ENCODE measurements at regions of chr5 and their contacts with region 1.

Region 1: DNA sequence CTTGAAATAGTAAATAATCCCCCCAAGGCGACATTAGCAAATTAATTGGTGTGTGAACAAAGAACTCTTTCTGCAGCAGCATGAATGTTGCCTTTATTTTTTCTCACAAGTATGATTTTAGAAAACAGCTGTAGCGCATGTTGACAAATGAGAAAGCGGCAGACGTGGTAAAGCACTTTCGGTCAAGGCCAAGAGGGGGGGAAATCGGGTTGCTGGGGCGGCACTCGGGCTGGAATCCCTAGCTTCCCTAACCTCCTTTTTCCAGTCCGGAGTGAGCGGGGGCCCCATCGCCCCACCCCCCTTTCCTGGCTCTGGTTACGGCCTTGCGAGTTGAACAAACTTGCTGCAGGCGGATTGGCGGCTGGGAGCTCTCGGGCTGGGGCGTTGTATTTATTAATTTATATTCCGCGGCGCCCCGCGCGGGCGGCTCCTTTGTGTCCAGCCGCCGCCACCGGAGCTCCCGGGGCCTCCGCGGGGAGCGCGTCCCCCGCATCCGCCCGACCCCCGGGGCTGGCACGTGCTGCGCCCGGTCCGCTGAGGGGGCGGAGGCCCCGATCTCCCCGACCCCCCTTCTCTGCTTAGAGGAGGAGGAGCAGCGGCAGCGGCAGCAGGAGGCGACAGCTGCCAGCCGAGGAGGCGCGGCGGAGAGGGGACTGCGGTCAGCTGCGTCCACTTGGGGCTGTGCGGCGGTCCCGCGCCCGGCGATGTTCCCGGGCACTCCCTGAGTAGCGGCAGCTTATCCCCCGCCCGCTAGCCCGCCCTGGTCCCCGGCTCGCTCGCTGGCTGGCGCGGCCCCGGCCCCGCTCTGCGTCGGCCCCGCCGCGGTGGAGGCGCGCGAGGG is at the start of gene RHOBTB3:
- DNase-seq: peak; percentile 52
- ATAC-seq: peak; percentile 73
- H3K4me3 Mint-ChIP-seq: peak within 1 kb of the TSS; percentile 87
- H3K27ac Mint-ChIP-seq: peak within 1 kb of the TSS; percentile 61
- H3K4me1 Mint-ChIP-seq: peaks cover 34% of the 10 kb centered on the region
- H3K27me3 Mint-ChIP-seq: peaks cover 18% of the 10 kb centered on the region
- CTCF ChIP-seq: no peak
- total RNA-seq, gene RHOBTB3: 3.3 and 5.0 TPM in 2 replicates

Region 2: DNA sequence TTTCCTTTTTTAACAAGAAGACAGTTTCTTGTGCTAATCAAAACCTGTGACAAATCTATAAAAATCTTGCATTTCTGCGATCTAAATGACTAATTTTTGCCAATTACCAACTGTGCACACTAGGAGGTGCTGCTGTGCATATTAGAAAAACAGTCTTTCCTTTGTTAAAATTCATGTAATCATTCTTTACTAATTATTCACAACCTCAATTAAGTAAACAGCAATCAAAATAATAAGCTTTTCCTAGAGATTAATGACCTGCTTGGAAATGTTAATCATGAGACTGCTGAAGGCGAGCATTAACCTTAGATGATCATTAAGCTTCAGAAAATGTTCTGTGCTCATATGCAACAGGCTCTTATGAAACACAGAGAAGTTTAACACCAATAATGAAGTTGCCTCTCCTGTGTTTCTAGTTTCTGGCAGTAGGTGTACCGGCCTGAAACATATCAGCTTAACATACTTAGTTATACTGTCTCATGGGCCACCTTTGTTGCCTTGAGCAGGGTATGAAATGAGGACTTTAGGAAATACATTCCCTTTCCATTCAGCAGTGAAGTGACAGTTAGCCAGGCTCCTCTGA is 66.7 kb before region 1 on chr5:
- CTCF ChIA-PET with region 1: no interaction called
- POLR2A ChIA-PET with region 1: interaction called, 5 read pairs
- intact Hi-C with region 1: loop called (anchors 5 kb)
- DNase-seq: no peak
- ATAC-seq: no peak
- H3K4me3 Mint-ChIP-seq: no peak overlapping the region
- H3K27ac Mint-ChIP-seq: no peak overlapping the region
- H3K4me1 Mint-ChIP-seq: no peaks in the 10 kb centered on the region
- H3K27me3 Mint-ChIP-seq: peaks cover 1% of the 10 kb centered on the region
- CTCF ChIP-seq: peak; percentile 81

Region 3: DNA sequence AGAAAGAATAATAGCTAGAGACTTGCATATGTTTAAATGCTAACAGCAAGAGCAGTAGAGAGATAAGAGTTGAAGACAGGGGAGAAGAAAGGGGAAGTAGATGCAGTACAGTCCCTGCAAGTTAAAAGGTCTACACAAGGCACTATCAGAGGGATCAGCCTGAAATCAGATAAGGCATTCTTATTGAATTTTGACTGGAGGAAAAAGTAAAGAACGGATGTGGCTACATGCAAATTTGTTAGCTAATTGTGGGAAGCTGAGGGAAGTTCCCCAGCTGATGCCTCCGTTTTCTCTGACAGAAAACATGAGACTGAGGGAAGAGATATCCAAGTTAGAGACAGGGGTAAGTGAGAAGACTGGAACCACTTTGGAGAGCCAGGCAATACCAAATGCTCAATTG is 12.7 kb before region 1 on chr5:
- CTCF ChIA-PET with region 1: no interaction called
- POLR2A ChIA-PET with region 1: interaction called, 3 read pairs
- intact Hi-C with region 1: loop called (anchors 1 kb)
- DNase-seq: no peak
- ATAC-seq: peak; percentile 86
- H3K4me3 Mint-ChIP-seq: no peak overlapping the region
- H3K27ac Mint-ChIP-seq: no peak overlapping the region
- H3K4me1 Mint-ChIP-seq: no peaks in the 10 kb centered on the region
- H3K27me3 Mint-ChIP-seq: no peaks in the 10 kb centered on the region
- CTCF ChIP-seq: no peak

Region 4: DNA sequence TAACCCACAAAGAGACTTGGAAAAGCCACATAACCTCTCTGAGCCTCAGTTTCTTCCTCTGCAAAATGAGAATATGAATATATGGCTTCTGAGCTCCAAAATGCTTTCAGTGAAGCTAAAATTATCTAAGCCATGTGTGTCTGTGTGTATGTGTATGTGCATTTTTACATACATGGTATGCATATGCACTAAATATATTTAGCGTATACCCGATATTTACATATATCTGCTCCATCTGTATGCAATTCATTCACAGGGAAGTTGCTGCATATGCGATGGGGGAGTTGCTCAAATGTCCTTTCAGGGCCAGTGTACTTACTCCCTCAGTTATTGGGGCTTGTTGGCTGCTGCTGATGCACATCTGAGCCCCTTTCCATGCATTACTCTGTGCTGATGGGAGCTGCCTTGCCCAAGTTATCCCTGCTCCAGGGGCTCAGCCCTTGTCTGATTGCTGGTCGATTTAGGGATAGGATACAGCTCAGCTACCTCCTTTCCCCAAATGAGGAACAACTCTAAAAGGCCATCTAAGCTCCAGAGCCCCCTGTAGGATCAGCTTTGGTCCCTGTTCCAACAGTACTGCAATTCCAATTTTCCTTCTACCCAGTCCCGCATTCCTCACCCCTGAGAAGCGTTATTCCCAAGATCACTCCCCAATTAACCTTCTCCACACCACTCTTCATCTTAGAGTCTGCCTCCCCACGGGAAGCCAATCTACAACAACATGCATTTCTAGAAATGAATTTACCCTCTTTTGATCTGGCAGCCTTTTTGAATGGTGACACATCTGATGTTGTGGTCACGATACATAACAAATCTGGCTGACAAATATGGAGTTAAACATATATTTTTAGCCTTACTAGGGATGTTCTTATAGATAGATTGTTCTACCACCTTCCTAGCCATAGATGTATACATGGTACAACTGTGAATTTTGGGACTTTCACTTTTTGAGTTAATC is 16.1 kb after region 1 on chr5:
- CTCF ChIA-PET with region 1: no interaction called
- POLR2A ChIA-PET with region 1: no interaction called
- intact Hi-C with region 1: loop called (anchors 2 kb)
- DNase-seq: no peak
- ATAC-seq: no peak
- H3K4me3 Mint-ChIP-seq: no peak overlapping the region
- H3K27ac Mint-ChIP-seq: no peak overlapping the region
- H3K4me1 Mint-ChIP-seq: no peaks in the 10 kb centered on the region
- H3K27me3 Mint-ChIP-seq: no peaks in the 10 kb centered on the region
- CTCF ChIP-seq: no peak

Region 5: DNA sequence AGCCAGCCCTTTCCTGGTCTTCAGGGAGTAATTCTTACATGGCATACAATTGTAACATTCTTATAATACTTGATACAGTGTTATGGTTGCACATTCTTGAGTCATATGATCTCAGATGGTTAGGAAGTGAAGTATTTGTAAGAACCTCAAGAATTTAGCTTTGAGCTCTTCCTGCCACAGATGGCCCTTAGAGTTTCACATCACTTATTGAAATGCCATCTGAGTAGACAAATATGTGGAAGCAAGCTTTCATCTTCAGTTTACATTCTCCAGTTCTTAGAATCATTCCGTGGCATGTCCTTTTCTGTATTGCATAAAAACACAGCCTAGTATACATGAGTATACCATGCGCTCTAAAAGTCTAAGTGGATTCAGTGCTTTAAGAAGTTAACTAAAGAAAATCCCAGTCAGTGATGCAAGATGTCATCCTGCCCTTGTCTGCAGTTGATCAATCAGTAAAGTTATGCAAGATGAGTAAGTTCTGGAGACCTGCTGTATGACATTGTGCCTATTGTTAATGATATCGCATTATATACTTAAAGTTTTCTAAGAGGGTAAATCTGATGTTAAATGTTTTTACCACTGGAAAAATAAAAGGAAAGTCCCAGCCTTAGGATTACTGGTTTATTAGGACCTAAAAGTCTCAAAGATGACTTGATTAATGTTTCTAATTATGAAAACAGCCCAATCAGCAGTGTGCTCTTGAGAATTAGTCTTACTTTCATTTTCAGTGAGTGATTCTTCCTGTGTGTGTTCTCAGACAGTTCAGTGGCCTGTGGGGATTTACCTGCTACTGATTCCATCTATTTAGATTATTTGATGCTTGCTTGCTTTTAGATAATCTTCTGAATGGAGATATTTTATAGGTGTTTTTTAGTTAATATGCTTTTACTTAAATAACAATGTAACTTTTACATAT is 29.6 kb after region 1 on chr5:
- CTCF ChIA-PET with region 1: interaction called, 6 read pairs
- POLR2A ChIA-PET with region 1: interaction called, 3 read pairs
- intact Hi-C with region 1: loop called (anchors 1 kb)
- DNase-seq: no peak
- ATAC-seq: peak; percentile 82
- H3K4me3 Mint-ChIP-seq: peak overlapping the region; percentile 74
- H3K27ac Mint-ChIP-seq: peak overlapping the region; percentile 89
- H3K4me1 Mint-ChIP-seq: peaks cover 42% of the 10 kb centered on the region
- H3K27me3 Mint-ChIP-seq: no peaks in the 10 kb centered on the region
- CTCF ChIP-seq: no peak

Region 6: DNA sequence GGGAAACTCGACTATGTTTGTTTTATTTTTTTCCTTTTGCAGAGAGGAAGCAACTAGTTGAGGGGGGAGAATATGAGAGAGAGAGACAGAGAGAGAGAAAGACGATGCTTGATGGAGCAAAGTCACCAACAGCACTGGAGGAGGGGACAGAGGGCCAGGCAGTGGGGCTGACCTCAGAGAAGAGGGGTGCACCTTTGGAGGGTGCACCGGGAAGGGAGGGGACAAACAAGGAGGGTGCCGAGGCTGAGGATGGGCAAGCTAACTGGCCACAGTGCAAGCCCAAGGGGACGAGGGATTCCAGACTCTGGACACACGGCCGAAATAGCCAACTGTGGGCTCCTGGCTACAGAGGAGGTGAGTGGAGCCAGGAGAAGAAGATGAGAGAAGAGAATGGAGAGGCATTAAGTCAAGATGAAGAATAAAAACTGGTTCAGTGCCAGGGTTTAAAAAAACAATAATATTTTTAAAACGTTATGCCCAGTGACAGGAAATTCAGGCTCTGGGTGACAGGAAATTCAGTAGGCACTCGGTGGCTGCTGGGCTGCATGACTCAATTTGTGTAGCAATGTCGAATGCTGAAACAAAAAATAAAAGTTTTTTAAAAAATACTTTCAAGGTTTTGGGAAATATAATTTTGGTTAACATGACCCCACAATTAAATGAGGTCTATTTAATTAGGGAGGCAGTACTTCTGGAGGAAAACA is 104.9 kb after region 1 on chr5:
- CTCF ChIA-PET with region 1: no interaction called
- POLR2A ChIA-PET with region 1: interaction called, 15 read pairs
- intact Hi-C with region 1: no loop called
- DNase-seq: no peak
- ATAC-seq: no peak
- H3K4me3 Mint-ChIP-seq: peak overlapping the region; percentile 92
- H3K27ac Mint-ChIP-seq: peak overlapping the region; percentile 84
- H3K4me1 Mint-ChIP-seq: peaks cover 55% of the 10 kb centered on the region
- H3K27me3 Mint-ChIP-seq: no peaks in the 10 kb centered on the region
- CTCF ChIP-seq: no peak

Measured in activated B cell treated with CpG ODN at 0.5 μM for 24 hours (primary cell).